Endothelial cell of umbilical vein (primary cell): ENCODE measurements at regions of chr16 and their contacts with region 1.

Region 1: GRCh38 chr16:85610508-85611332 is 2.4 kb upstream of the GSE1 start:
- DNase-seq: peak; percentile 53
- H3K4me3 ChIP-seq: no peak overlapping the region
- H3K27ac ChIP-seq: no peak overlapping the region
- H3K4me1 ChIP-seq: peaks cover 12% of the 10 kb centered on the region
- H3K27me3 ChIP-seq: peaks cover 0 to 2% of the 10 kb centered on the region in 2 experiments
- CTCF ChIP-seq: peak; percentile 98 to 99
- POLR2A ChIP-seq: no peak

Region 2: GRCh38 chr16:85369741-85370528 is 240.8 kb before region 1 on chr16:
- CTCF ChIA-PET with region 1: interaction called, 9 read pairs
- POLR2A ChIA-PET with region 1: no interaction called
- dilution Hi-C with region 1: no loop called
- intact Hi-C with region 1: loop called (anchors 1 kb)
- DNase-seq: no peak
- H3K4me3 ChIP-seq: no peak overlapping the region
- H3K27ac ChIP-seq: no peak overlapping the region
- H3K4me1 ChIP-seq: no peaks in the 10 kb centered on the region
- H3K27me3 ChIP-seq: no peaks in the 10 kb centered on the region
- CTCF ChIP-seq: peak; percentile 75 to 87
- POLR2A ChIP-seq: no peak

Region 3: DNA sequence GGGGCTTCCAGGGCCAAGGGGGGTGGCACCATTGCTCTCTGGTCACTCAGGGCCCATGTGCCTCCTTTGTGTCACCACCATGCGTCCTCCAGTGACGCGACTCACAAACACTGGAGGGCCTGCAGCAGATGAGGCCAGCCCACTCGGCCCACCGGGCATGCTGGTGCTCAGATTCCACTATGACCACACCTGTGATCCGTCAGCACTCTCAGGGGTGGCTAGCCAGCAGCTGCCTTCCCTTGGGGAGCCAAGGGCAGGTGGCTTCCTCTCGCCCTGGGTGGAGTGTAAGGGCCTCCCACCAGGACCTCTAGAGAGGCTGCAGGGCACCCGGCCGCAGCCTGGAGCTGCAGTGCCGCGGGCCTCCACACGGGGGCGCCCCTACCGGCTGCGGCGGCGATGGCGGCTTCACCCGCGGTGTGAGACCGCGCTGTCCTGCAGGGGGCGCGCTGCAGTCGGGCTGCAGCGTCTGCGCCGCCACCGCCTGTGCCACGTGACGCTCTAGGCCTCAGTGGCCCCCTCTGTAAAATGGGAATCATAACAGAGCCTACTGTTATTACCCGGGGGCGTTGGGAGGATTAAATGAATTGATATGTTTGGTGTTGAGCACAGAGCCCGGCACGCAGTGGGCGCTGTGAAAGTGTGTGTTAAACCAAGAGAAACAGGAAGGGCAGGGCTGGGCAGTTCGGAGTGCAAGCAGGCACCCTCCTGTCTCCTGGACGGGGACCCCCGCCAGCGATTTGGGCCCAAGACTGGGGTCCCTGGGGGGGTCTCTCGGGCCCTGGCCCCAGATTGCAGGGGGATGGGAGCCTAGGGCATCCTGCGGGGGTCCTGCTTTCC is 190.0 kb before region 1 on chr16:
- CTCF ChIA-PET with region 1: interaction called, 39 read pairs
- POLR2A ChIA-PET with region 1: no interaction called
- dilution Hi-C with region 1: no loop called
- intact Hi-C with region 1: loop called (anchors 1 kb)
- DNase-seq: peak; percentile 30
- H3K4me3 ChIP-seq: no peak overlapping the region
- H3K27ac ChIP-seq: no peak overlapping the region
- H3K4me1 ChIP-seq: no peaks in the 10 kb centered on the region
- H3K27me3 ChIP-seq: no peaks in the 10 kb centered on the region
- CTCF ChIP-seq: peak; percentile 96 to 100
- POLR2A ChIP-seq: no peak

Region 4: GRCh38 chr16:85564277-85565051 is 46.3 kb before region 1 on chr16:
- CTCF ChIA-PET with region 1: interaction called, 6 read pairs
- POLR2A ChIA-PET with region 1: no interaction called
- dilution Hi-C with region 1: no loop called
- intact Hi-C with region 1: loop called (anchors 1 kb)
- DNase-seq: no peak
- H3K4me3 ChIP-seq: no peak overlapping the region
- H3K27ac ChIP-seq: no peak overlapping the region
- H3K4me1 ChIP-seq: peaks cover 14% of the 10 kb centered on the region
- H3K27me3 ChIP-seq: no peaks in the 10 kb centered on the region
- CTCF ChIP-seq: peak; percentile 47 to 48
- POLR2A ChIP-seq: no peak